ENCODE measurements at regions of chr2 and their contacts with region 1.

Region 1: DNA sequence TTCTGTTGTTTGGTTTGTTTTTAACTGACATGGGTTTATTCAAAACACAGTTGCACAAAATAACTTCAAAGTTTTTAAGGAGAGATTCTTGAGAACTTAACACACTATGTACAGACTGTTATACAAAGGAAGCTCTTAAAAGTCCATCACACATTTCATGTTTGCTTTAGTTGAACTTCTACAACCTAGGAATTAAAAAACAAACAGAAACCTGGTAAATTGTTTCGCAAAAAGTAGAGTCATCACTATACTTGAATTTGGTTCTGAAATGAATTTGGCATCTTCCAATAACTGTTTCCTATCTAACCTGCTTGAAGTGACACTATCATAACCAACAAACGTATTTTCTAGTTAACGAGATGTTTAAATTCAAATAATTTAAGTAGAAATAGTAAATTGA is 21.8 kb downstream of the TRIP12 start:
- DNase-seq: no peak
- ATAC-seq: no peak
- H3K4me3 Mint-ChIP-seq: no peak overlapping the region
- H3K27ac Mint-ChIP-seq: no peak overlapping the region
- H3K4me1 Mint-ChIP-seq: peaks cover 32% of the 10 kb centered on the region
- H3K27me3 Mint-ChIP-seq: no peaks in the 10 kb centered on the region
- CTCF ChIP-seq: no peak

Region 2: GRCh38 chr2:229861431-229861830 is 38.6 kb before region 1 on chr2:
- CTCF ChIA-PET with region 1: no interaction called
- POLR2A ChIA-PET with region 1: no interaction called
- intact Hi-C with region 1: loop called (anchors 5 kb)
- DNase-seq: no peak
- ATAC-seq: no peak
- H3K4me3 Mint-ChIP-seq: no peak overlapping the region
- H3K27ac Mint-ChIP-seq: no peak overlapping the region
- H3K4me1 Mint-ChIP-seq: peaks cover 18% of the 10 kb centered on the region
- H3K27me3 Mint-ChIP-seq: no peaks in the 10 kb centered on the region
- CTCF ChIP-seq: no peak

Region 3: DNA sequence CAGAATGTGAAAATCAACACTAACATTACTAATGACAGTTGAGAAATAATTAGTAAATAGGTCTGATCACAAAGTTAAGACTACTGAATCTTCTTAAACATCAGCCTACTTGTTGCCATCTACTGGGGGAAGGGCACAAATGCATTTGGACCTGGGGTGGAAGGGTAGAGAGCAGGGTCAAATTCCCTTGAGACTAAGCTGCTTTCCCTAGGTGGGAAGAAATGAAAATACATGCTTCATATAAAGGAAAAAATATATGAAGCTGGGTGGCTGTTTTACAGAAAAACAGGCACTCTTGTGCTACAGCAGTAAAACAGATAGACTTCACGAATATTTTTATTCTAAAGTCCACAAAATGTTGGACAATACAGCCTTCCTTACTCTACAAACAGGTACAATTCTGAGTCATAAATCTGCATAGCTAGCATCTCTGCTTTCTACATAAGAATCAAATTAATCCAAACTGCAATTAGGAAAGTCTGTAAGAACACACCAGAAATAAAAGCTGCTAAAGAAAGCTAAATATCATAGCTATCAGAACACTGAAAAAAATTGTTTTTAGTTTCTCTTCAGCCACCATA is 10.9 kb after region 1 on chr2:
- CTCF ChIA-PET with region 1: no interaction called
- POLR2A ChIA-PET with region 1: interaction called, 3 read pairs
- intact Hi-C with region 1: loop called (anchors 2 kb)
- DNase-seq: no peak
- ATAC-seq: peak; percentile 92
- H3K4me3 Mint-ChIP-seq: peak overlapping the region; percentile 32
- H3K27ac Mint-ChIP-seq: peak overlapping the region; percentile 19
- H3K4me1 Mint-ChIP-seq: peaks cover 58% of the 10 kb centered on the region
- H3K27me3 Mint-ChIP-seq: no peaks in the 10 kb centered on the region
- CTCF ChIP-seq: no peak

Measured in activated B cell treated with CpG ODN at 0.5 μM for 24 hours (primary cell).